Right ventricle myocardium superior (tissue), 1 donor: ENCODE measurements at regions of chr15 and their contacts with region 1.

Region 1: GRCh38 chr15:78234515-78235040 is at the start of gene ACSBG1:
- DNase-seq: no peak
- ATAC-seq: no peak
- total RNA-seq, gene ACSBG1: 0.38 TPM

Region 2: DNA sequence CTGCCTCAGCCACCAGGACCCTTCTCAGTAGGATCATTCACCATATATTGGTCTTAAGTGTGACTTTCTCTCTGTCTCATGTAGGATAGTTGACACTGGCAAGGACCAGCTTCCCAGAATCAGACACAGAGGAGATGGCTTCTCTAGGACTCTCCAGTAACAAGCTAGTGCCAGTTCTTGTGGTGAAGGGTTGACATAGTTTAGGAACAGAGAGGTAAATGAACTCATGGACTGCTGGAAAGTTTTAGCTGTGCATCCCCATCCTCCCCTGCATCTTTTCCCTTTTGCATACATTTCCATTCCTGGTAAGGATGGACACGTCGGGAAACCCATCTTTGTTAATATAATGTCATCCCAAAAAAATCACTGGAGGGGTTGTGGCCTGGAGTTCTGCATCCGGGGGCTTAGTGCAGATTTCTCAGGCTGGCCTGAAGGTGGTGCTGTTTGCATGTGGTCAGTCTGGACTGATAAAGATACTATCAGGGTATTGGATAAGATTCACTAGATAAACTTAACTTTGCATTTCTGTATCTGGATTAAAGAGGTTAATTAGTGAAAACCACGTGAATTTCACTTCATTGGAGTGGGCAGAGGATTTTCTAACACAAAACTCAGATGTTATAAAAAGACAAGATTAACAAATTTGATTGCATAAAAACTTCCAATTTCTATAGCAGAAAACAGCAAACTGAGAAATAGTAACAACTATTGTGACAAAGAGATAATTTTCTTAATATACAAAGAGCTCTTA is 267.9 kb before region 1 on chr15:
- intact Hi-C with region 1: loop called (anchors 10 kb)
- DNase-seq: no peak
- ATAC-seq: peak; percentile 88

Region 3: GRCh38 chr15:78170848-78171773 is 63.5 kb before region 1 on chr15:
- intact Hi-C with region 1: no loop called
- DNase-seq: no peak
- ATAC-seq: peak; percentile 55